ENCODE measurements at regions of chr18 and their contacts with region 1.

Region 1: GRCh38 chr18:10928772-10929373 is 220.5 kb downstream of the PIEZO2 start:
- DNase-seq: peak; percentile 66
- CTCF ChIP-seq: no peak

Region 2: DNA sequence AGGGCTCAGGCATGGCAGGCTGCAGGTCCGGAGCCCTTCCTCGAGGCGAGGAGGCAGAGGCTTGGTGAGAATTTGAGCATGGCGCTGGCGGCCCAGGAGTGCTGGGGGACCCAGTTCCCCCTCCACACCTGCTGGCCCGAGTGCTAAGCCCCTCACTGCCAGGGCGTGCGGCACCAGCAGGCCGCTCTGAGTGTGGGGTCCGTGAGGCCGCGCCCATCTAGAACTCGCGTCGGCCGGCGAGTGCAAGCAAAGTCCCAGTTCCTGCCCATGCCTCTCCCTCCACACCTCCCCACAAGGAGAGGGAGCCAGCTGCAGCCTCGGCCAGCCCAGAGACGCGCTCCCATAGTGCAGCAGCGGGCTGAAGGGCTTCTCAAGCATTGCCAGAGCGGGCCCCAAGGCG is 12.5 kb before region 1 on chr18:
- CTCF ChIA-PET with region 1: interaction called, 12 read pairs
- POLR2A ChIA-PET with region 1: interaction called, 3 read pairs
- DNase-seq: no peak
- CTCF ChIP-seq: no peak

Region 3: GRCh38 chr18:10950876-10951630 is 22.2 kb after region 1 on chr18:
- CTCF ChIA-PET with region 1: interaction called, 3 read pairs
- POLR2A ChIA-PET with region 1: interaction called, 11 read pairs
- DNase-seq: no peak
- CTCF ChIP-seq: no peak

Region 4: GRCh38 chr18:10965119-10965518 is 36.2 kb after region 1 on chr18:
- CTCF ChIA-PET with region 1: no interaction called
- POLR2A ChIA-PET with region 1: no interaction called
- DNase-seq: no peak
- CTCF ChIP-seq: no peak